ENCODE measurements at regions of chr2 and their contacts with region 1.

Region 1: DNA sequence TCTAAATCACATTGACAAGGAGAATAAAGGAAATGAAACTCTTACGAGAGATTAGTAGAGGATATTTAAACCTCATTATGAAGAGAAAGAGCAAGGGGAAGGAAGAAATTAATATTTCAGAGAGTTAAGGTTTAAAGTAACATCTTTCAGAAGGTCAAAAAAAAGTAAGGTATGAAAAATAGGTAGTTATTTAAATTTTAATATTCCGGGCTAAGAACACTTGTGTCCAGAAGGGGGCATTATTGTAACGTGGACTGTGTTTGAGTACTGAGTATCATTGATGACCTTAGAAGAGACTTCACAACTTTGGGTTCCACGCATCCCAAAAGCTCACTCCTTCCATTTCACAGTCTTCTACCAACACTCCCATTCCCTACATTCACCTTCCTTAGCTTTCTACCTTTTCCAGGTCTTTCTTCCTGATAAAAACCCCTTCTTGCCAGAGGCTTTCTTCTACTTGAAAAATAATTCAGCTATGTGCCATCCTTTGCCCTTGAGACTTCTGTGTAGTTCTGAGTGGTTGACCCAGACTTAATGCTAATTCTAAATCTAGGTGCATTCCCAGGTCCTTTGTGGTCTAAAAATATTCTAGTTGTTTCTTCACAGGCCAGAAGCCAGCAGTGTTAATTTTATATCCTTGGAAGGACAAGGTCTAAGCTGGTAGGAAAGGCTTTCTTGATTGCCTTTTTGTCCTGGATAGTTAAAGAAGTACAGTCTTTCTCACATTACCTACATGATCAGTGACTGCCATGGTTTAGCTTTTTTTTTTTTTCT is 16.5 kb downstream of the DYNC1I2 start:
- DNase-seq: peak; percentile 72
- H3K4me3 ChIP-seq: no peak overlapping the region
- H3K27ac ChIP-seq: peak overlapping the region; percentile 52
- H3K4me1 ChIP-seq: peaks cover 74% of the 10 kb centered on the region
- H3K27me3 ChIP-seq: no peaks in the 10 kb centered on the region
- CTCF ChIP-seq: peak; percentile 71

Region 2: GRCh38 chr2:171505374-171505773 is 198.4 kb before region 1 on chr2:
- CTCF ChIA-PET with region 1: no interaction called
- POLR2A ChIA-PET with region 1: no interaction called
- intact Hi-C with region 1: no loop called
- DNase-seq: no peak
- H3K4me3 ChIP-seq: no peak overlapping the region
- H3K27ac ChIP-seq: no peak overlapping the region
- H3K4me1 ChIP-seq: no peaks in the 10 kb centered on the region
- H3K27me3 ChIP-seq: no peaks in the 10 kb centered on the region
- CTCF ChIP-seq: no peak

Region 3: GRCh38 chr2:171598713-171599319 is 104.9 kb before region 1 on chr2:
- CTCF ChIA-PET with region 1: no interaction called
- POLR2A ChIA-PET with region 1: no interaction called
- intact Hi-C with region 1: loop called (anchors 5 kb)
- DNase-seq: peak; percentile 80
- H3K4me3 ChIP-seq: no peak overlapping the region
- H3K27ac ChIP-seq: no peak overlapping the region
- H3K4me1 ChIP-seq: peaks cover 5% of the 10 kb centered on the region
- H3K27me3 ChIP-seq: no peaks in the 10 kb centered on the region
- CTCF ChIP-seq: peak; percentile 84

Region 4: DNA sequence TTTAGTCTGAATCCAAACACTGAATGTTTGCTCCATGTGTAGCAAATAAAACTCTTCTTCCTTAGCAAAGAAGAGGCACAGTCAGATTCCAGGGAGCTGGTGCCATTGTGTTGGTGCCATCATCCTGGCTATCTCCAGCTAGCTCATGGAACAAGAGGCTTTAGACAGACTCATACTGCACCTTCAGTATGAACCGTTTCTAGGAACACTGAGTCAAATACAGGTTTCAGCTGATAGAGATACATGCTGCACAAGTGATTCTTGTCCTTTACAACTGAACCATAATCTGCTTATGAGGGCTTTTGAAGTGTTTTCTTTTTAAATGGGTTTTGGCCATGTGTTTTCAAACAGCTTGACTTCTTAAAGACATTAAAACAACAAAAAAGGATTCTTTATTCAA is 41.4 kb after region 1 on chr2:
- CTCF ChIA-PET with region 1: no interaction called
- POLR2A ChIA-PET with region 1: no interaction called
- intact Hi-C with region 1: no loop called
- DNase-seq: no peak
- H3K4me3 ChIP-seq: no peak overlapping the region
- H3K27ac ChIP-seq: no peak overlapping the region
- H3K4me1 ChIP-seq: peaks cover 9% of the 10 kb centered on the region
- H3K27me3 ChIP-seq: no peaks in the 10 kb centered on the region
- CTCF ChIP-seq: no peak

Region 5: GRCh38 chr2:171957061-171957460 is 253.3 kb after region 1 on chr2:
- CTCF ChIA-PET with region 1: no interaction called
- POLR2A ChIA-PET with region 1: no interaction called
- intact Hi-C with region 1: loop called (anchors 10 kb)
- DNase-seq: peak; percentile 71
- H3K4me3 ChIP-seq: no peak overlapping the region
- H3K27ac ChIP-seq: peak overlapping the region; percentile 16
- H3K4me1 ChIP-seq: peaks cover 10% of the 10 kb centered on the region
- H3K27me3 ChIP-seq: no peaks in the 10 kb centered on the region
- CTCF ChIP-seq: peak; percentile 53

Region 6: DNA sequence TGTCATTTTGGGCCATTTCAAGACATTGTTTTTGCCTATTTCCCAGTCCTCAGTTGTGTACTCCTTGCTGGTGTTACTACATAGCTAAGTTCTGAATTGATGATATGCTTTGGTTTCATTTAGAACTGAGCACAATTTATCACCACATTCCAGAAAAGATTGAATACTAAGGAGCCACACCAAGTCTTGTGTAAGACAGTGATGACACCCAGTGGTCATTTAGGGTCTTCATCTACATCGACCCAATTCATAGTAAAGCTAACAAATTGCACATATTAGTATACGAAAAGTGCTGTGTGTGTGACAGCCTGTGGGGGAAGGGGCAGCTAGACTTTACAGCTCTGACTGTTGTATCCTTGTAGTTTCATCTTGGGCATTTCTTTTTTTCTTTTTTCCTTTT is 409.9 kb after region 1 on chr2:
- CTCF ChIA-PET with region 1: interaction called, 11 read pairs
- POLR2A ChIA-PET with region 1: no interaction called
- intact Hi-C with region 1: no loop called
- DNase-seq: peak; percentile 79
- H3K4me3 ChIP-seq: no peak overlapping the region
- H3K27ac ChIP-seq: no peak overlapping the region
- H3K4me1 ChIP-seq: peaks cover 3% of the 10 kb centered on the region
- H3K27me3 ChIP-seq: no peaks in the 10 kb centered on the region
- CTCF ChIP-seq: peak; percentile 63

Region 7: GRCh38 chr2:172253190-172254052 is 549.7 kb after region 1 on chr2:
- CTCF ChIA-PET with region 1: no interaction called
- POLR2A ChIA-PET with region 1: no interaction called
- intact Hi-C with region 1: no loop called
- DNase-seq: peak; percentile 93
- H3K4me3 ChIP-seq: no peak overlapping the region
- H3K27ac ChIP-seq: no peak overlapping the region
- H3K4me1 ChIP-seq: peaks cover 17% of the 10 kb centered on the region
- H3K27me3 ChIP-seq: no peaks in the 10 kb centered on the region
- CTCF ChIP-seq: no peak

Region 8: DNA sequence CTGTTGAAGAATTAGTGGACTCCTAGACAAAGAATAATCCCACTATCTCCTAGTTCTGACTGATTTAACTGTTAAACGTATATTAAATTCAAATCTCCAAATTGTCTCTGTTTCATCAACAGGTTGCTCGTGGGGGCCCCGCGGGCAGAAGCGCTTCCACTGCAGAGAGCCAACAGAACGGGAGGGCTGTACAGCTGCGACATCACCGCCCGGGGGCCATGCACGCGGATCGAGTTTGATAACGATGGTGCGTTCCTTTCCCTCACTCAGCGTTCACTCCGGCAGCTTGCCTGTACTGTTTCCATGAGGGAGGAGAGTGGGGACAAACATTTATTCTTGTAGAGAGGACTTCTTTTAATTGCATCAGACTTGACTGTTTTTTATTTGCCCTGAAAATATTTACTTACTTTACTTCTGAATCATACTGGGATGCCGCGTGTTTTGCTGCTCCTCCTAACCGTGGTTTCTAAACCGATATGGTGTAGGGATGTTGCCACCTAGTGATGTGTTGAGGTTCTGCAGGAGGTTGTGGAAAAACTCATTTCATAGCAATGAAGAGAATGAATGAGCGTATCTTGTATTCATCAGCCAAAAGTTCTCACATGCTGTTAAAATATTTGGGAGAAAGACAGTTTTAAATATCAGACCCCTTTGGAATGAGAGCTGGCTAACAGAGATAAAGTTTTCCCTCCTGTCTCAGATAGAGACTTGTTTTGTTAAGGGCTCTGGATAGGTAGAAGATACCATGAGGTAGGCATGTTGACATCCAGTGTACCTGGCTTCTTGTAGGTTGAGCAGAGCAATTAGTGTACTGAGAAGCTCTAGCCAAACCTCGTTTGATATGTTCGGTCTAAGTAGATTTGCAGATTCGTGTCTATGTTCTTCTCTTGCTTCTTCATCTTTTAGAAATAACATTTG is 761.9 kb after region 1 on chr2:
- CTCF ChIA-PET with region 1: interaction called, 3 read pairs
- POLR2A ChIA-PET with region 1: no interaction called
- intact Hi-C with region 1: loop called (anchors 2 kb)
- DNase-seq: peak; percentile 85
- H3K4me3 ChIP-seq: peak overlapping the region; percentile 28
- H3K27ac ChIP-seq: no peak overlapping the region
- H3K4me1 ChIP-seq: peaks cover 16% of the 10 kb centered on the region
- H3K27me3 ChIP-seq: no peaks in the 10 kb centered on the region
- CTCF ChIP-seq: peak; percentile 96